Lower lobe of right lung (tissue), 2 donors: ENCODE measurements at regions of chr14 and their contacts with region 1.

Region 1: GRCh38 chr14:61694830-61695694 is at the start of gene HIF1A:
- DNase-seq: peak; percentile 99
- ATAC-seq: peak; percentile 98 to 99
- H3K4me3 ChIP-seq: peak within 1 kb of the TSS; percentile 95
- H3K27ac ChIP-seq: peak within 1 kb of the TSS; percentile 98
- H3K4me1 ChIP-seq: peaks cover 40% of the 10 kb centered on the region
- H3K27me3 ChIP-seq: no peaks in the 10 kb centered on the region
- CTCF ChIP-seq: peak; percentile 18
- total RNA-seq, gene HIF1A: 68.6 TPM

Region 2: GRCh38 chr14:61342486-61342885 is 352.6 kb before region 1 on chr14:
- intact Hi-C with region 1: no loop called
- DNase-seq: no peak
- ATAC-seq: peak; percentile 46 to 60
- H3K4me3 ChIP-seq: no peak overlapping the region
- H3K27ac ChIP-seq: peak overlapping the region; percentile 83
- H3K4me1 ChIP-seq: peaks cover 71% of the 10 kb centered on the region
- H3K27me3 ChIP-seq: no peaks in the 10 kb centered on the region
- CTCF ChIP-seq: no peak

Region 3: DNA sequence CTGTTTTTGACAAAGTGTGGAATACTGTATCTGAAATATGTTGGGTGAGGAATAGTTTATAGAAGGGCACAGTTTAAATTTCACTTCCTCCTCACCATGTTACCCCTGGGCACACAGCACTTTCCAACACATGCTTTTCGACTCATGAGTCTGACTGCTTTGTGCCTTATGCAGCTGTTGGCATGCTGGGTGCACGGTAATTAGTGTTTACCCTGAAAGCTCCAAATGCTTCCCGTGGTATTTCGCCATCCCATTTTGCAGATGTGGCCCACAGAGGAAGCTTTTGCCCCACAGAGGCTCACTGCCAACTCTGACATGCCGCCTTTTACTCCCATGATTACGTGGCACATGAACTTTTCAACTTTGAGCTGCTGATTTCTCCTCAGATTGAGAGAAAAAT is 205.1 kb before region 1 on chr14:
- intact Hi-C with region 1: loop called (anchors 10 kb)
- DNase-seq: peak; percentile 74
- ATAC-seq: peak; percentile 22 to 83
- H3K4me3 ChIP-seq: no peak overlapping the region
- H3K27ac ChIP-seq: peak overlapping the region; percentile 51
- H3K4me1 ChIP-seq: peaks cover 69% of the 10 kb centered on the region
- H3K27me3 ChIP-seq: no peaks in the 10 kb centered on the region
- CTCF ChIP-seq: no peak